A673 (cell line): ENCODE measurements at regions of chr20 and their contacts with region 1.

Region 1: GRCh38 chr20:34876162-34877001 is at the start of gene ACSS2:
- DNase-seq: peak; percentile 99
- H3K4me3 ChIP-seq: peak within 1 kb of the TSS; percentile 80
- H3K27ac ChIP-seq: peak within 1 kb of the TSS; percentile 65
- H3K4me1 ChIP-seq: peaks cover 27% of the 10 kb centered on the region
- H3K27me3 ChIP-seq: no peaks in the 10 kb centered on the region
- CTCF ChIP-seq: no peak
- total RNA-seq, gene ACSS2: 28.7 and 33.5 TPM in 2 replicates

Region 2: GRCh38 chr20:34268851-34269636 is 607.3 kb before region 1 on chr20:
- CTCF ChIA-PET with region 1: no interaction called
- POLR2A ChIA-PET with region 1: no interaction called
- intact Hi-C with region 1: no loop called
- DNase-seq: peak; percentile 49
- H3K4me3 ChIP-seq: peak overlapping the region; percentile 28
- H3K27ac ChIP-seq: no peak overlapping the region
- H3K4me1 ChIP-seq: no peaks in the 10 kb centered on the region
- H3K27me3 ChIP-seq: no peaks in the 10 kb centered on the region
- CTCF ChIP-seq: 0 out of 2 replicates have a peak, but pooled peaks have one; percentile 14

Region 3: DNA sequence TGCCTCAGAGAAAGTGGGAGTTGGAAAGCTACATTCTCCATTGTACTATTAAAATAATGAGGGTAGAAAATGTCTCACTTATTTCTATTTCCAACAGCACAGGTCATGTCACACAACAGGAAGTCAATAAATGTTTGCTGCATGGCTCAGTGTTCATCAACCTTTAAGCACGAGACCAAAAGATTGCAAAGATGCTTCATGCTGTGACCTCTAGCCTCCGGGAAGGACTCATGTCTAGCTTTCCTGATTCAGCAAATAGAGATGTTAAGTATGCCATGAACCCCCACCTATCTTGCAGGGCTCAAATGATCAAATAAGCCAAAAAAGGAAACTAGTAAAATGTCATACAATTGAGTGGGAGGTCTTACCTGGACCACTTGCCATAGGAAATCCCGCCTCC is 108.3 kb before region 1 on chr20:
- CTCF ChIA-PET with region 1: interaction called, 10 read pairs
- POLR2A ChIA-PET with region 1: no interaction called
- intact Hi-C with region 1: no loop called
- DNase-seq: no peak
- H3K4me3 ChIP-seq: no peak overlapping the region
- H3K27ac ChIP-seq: no peak overlapping the region
- H3K4me1 ChIP-seq: no peaks in the 10 kb centered on the region
- H3K27me3 ChIP-seq: no peaks in the 10 kb centered on the region
- CTCF ChIP-seq: no peak

Region 4: DNA sequence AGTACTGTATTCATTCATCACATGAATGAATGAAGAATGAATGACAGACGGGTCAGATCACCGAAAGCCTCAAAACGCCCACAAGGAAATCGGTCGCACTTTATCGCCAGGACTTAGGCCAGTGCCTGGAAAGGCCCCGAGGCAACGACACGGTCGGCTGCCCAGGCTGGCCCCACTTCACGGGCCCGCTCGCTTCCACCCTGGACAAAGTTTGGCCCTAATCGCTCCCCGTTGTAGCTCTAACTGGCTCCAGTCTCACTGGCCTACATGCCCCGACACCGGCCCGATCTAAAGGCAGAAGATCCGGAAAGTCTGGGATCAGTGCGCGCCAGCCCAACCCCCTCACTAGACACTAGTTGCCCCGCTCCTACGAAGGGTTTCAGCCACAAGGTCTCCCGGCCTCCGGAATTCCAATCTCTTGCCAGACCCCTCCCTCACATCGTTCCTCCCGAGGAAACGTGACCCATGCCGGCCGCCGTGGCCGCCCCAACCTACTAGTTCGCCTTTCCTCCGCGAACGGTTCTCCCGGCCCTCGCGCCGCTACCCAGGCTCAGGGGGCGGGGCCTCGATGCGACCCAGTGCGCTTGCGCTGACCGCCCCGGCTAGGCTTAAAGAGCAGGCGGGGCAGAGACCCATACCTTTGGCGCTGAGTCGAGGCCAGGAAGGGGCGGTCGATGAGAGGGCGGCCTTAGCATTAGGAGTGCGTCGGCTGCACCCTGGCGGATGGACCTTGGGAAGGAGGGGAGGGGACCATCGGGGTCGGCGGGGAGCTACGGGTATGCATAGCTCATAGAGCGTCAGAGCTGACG is 79.1 kb after region 1 on chr20 and contains the starts of genes GSS and MYH7B:
- CTCF ChIA-PET with region 1: interaction called, 9 read pairs
- POLR2A ChIA-PET with region 1: interaction called, 3 read pairs
- intact Hi-C with region 1: loop called (anchors 1 kb)
- DNase-seq: peak; percentile 96
- H3K4me3 ChIP-seq: peak within 1 kb of the TSS; percentile 70
- H3K27ac ChIP-seq: peak within 1 kb of the TSS; percentile 87
- H3K4me1 ChIP-seq: peaks cover 8% of the 10 kb centered on the region
- H3K27me3 ChIP-seq: no peaks in the 10 kb centered on the region
- CTCF ChIP-seq: peak; percentile 56
- total RNA-seq, gene GSS: 53.5 and 63.1 TPM in 2 replicates
- total RNA-seq, gene MYH7B: 0.34 and 1.1 TPM in 2 replicates

Region 5: GRCh38 chr20:35092524-35093266 is 216.3 kb after region 1 on chr20 and contains the start of gene TRPC4AP:
- CTCF ChIA-PET with region 1: interaction called, 7 read pairs
- POLR2A ChIA-PET with region 1: no interaction called
- intact Hi-C with region 1: loop called (anchors 10 kb)
- DNase-seq: peak; percentile 94
- H3K4me3 ChIP-seq: peak within 1 kb of the TSS; percentile 94
- H3K27ac ChIP-seq: peak within 1 kb of the TSS; percentile 87
- H3K4me1 ChIP-seq: peaks cover 26% of the 10 kb centered on the region
- H3K27me3 ChIP-seq: no peaks in the 10 kb centered on the region
- CTCF ChIP-seq: peak; percentile 97
- total RNA-seq, gene TRPC4AP: 34.6 and 39.5 TPM in 2 replicates

Region 6: GRCh38 chr20:35146920-35147574 is 270.7 kb after region 1 on chr20 and contains the start of gene EDEM2:
- CTCF ChIA-PET with region 1: interaction called, 4 read pairs
- POLR2A ChIA-PET with region 1: no interaction called
- intact Hi-C with region 1: loop called (anchors 10 kb)
- DNase-seq: peak; percentile 97
- H3K4me3 ChIP-seq: peak within 1 kb of the TSS; percentile 72
- H3K27ac ChIP-seq: peak within 1 kb of the TSS; percentile 55
- H3K4me1 ChIP-seq: no peaks in the 10 kb centered on the region
- H3K27me3 ChIP-seq: no peaks in the 10 kb centered on the region
- CTCF ChIP-seq: no peak
- total RNA-seq, gene EDEM2: 13.6 and 16.1 TPM in 2 replicates

Region 7: GRCh38 chr20:35207950-35208611 is 331.7 kb after region 1 on chr20:
- CTCF ChIA-PET with region 1: no interaction called
- POLR2A ChIA-PET with region 1: no interaction called
- intact Hi-C with region 1: loop called (anchors 1 kb)
- DNase-seq: peak; percentile 77
- H3K4me3 ChIP-seq: no peak overlapping the region
- H3K27ac ChIP-seq: no peak overlapping the region
- H3K4me1 ChIP-seq: no peaks in the 10 kb centered on the region
- H3K27me3 ChIP-seq: no peaks in the 10 kb centered on the region
- CTCF ChIP-seq: peak; percentile 78

Region 8: GRCh38 chr20:36162272-36162966 is 1286.0 kb after region 1 on chr20:
- CTCF ChIA-PET with region 1: no interaction called
- POLR2A ChIA-PET with region 1: interaction called, 14 read pairs
- intact Hi-C with region 1: no loop called
- DNase-seq: peak; percentile 45
- H3K4me3 ChIP-seq: no peak overlapping the region
- H3K27ac ChIP-seq: no peak overlapping the region
- H3K4me1 ChIP-seq: no peaks in the 10 kb centered on the region
- H3K27me3 ChIP-seq: no peaks in the 10 kb centered on the region
- CTCF ChIP-seq: no peak